Posterior vena cava (tissue), 2 donors: ENCODE measurements at regions of chr16 and their contacts with region 1.

Region 1: DNA sequence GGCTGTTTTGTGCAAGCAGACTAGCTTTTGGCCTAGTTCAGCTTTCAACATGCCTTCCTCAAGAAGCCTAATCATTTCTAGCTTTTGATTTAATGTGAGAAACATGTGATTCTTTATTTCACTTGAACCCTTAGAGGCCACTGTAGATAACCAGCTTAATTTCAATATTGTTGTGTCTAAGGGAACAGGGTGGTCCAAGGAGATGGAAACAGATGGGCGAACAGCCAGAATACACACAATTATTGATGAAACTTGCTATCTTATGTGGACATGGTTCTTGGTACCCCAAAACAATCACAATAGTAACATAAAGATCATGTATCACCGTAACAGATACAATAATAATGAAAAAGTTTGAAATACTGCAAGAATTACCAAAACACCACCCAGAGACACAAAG is 4.8 kb downstream of the NPRL3 start:
- DNase-seq: no peak

Region 2: DNA sequence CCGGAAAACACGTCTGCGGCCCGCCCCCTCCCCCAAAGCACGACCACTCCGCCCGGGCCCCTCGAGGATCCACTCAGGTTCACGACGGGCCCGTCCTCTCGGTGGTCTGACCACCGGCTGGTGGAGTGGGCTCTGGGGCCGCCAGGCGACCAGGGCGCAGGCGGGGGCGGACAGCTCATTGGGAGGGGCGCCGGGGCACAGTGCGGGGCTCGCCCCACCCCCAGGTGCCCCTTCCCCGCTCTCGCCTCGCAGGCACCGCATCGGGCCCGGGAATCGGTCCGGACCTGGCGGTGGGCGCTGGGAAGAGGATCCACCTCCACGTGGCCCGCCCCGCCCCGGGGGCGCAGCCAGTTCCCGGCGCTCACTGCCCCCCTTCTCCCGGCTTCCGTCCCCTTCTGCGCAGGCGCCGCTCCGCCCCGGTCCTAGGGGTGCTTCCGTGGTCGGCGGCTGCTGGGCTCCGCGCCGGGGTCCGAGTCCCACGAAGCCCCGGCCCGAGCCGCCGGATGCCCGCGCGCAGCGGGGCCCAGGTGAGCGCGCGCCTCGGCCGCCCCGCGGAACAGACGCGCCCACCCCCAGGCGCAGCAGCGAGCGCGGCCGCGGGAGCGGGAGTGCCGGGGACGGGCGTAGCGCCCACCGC is 55.8 kb before region 1 on chr16 and contains the start of gene MPG:
- intact Hi-C with region 1: no loop called
- DNase-seq: peak; percentile 96
- total RNA-seq, gene MPG: 42.2 to 45.6 TPM

Region 3: GRCh38 chr16:117379-118365 is 16.0 kb before region 1 on chr16:
- intact Hi-C with region 1: no loop called
- DNase-seq: no peak

Region 4: DNA sequence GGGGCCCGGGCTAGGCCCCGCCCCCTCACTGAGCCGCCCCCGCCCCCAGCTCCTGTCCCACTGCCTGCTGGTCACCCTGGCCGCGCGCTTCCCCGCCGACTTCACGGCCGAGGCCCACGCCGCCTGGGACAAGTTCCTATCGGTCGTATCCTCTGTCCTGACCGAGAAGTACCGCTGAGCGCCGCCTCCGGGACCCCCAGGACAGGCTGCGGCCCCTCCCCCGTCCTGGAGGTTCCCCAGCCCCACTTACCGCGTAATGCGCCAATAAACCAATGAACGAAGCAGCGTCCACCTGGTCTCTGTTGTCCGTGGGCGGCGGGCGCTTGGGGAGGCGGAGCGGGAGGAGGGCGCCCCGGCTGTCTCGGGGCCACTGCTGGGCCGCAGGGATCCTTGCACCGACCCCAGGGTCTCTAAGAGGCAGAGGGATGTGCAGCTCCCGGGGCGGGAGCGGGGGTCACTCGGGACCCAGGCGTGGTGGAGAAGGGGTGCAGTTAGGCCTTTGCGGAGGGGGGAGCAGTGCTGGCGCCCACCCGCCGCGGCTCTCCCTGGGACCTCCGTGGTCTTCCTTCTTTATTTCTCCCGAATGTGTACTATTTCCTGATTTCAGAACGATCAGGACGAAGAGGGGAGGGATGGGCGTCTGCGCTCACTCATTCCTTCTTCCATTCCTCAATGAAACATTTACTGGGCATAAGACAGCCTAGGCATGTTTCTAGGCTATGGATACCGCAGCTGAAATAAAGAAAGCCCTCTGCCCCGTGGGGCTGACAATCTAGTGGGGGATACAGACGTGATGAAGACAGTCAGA is 20.7 kb after region 1 on chr16:
- intact Hi-C with region 1: loop called in 1 of 2 experiments (anchors 1 kb)
- DNase-seq: peak; percentile 63

Region 5: GRCh38 chr16:471353-472198 is 337.9 kb after region 1 on chr16:
- intact Hi-C with region 1: no loop called
- DNase-seq: no peak